PC-3 (cell line): ENCODE measurements at regions of chr14 and their contacts with region 1.

Region 1: DNA sequence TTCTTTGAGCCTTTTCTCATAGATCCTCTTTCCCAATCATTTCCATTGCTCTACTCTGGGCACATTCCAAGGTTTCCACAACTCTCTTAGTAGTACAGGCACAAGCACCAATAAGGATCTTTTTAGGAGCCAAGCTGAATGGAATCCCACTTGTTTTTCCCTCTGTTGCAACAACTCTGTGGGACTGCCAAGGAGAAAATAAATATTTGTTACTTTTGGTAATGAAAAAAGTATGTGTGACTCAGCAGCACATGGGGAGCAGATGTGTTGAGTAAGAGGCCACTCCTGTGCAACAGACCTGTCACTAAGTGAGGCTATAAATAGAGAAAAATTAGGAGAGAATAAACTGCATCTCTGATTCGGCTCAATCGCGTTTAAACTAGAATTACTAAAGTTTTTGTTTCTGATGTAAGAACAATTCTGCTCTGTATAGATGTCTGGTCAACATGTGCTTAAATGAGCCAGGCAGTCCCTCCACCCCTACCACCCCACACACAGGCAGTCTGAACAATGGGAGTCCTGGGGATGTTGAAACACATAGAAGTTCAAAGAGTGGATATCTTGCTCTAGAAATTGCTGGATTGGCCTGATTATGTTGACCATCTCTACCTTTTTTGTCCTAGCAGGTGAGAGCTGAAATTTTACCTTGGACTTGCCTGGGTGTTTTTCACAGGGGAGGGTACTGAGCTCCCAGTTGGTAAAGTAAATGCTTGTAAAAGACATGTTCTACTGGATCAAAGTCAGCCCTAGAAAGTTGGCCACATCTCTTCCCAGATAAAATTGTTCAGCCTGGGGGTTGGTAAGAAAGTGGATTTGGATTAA is 244.3 kb upstream of the NOVA1 start:
- DNase-seq: peak; percentile 98
- ATAC-seq: peak; percentile 92
- H3K4me3 ChIP-seq: peak overlapping the region; percentile 36; the same call in 1 of the 2 replicates
- H3K27ac ChIP-seq: peak overlapping the region; percentile 92
- H3K4me1 ChIP-seq: peaks cover 38% of the 10 kb centered on the region
- H3K27me3 ChIP-seq: no peaks in the 10 kb centered on the region
- CTCF ChIP-seq: no peak

Region 2: DNA sequence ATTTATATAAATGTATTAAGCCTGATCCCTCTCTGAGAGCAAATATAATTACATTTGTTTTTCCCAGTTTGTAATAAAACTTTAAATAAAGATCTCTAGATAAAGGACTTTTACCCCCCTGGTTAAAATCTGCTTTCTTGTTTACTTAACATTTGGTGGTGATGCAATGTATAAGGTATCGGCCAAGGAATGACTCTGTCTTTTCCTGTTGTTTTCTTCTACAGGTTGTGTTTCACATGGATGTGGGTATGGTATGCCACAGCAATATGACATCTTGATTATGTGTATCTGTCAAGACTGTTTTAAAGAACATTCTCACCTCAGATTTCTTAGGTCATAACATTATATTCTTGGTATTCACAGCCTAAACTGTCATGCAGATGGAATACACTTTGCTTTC is 33.7 kb before region 1 on chr14:
- CTCF ChIA-PET with region 1: no interaction called
- POLR2A ChIA-PET with region 1: interaction called, 10 read pairs
- intact Hi-C with region 1: no loop called
- DNase-seq: peak; percentile 61
- ATAC-seq: peak; percentile 91
- H3K4me3 ChIP-seq: no peak overlapping the region
- H3K27ac ChIP-seq: 0 out of 2 replicates have a peak overlapping the region, but pooled peaks have one; percentile 7
- H3K4me1 ChIP-seq: peaks cover 11% of the 10 kb centered on the region
- H3K27me3 ChIP-seq: no peaks in the 10 kb centered on the region
- CTCF ChIP-seq: no peak

Region 3: GRCh38 chr14:26828741-26829140 is 13.4 kb before region 1 on chr14:
- CTCF ChIA-PET with region 1: no interaction called
- POLR2A ChIA-PET with region 1: interaction called, 6 read pairs
- intact Hi-C with region 1: loop called (anchors 2 kb)
- DNase-seq: peak; percentile 26
- ATAC-seq: peak; percentile 72
- H3K4me3 ChIP-seq: no peak overlapping the region
- H3K27ac ChIP-seq: no peak overlapping the region
- H3K4me1 ChIP-seq: peaks cover 8% of the 10 kb centered on the region
- H3K27me3 ChIP-seq: no peaks in the 10 kb centered on the region
- CTCF ChIP-seq: no peak

Region 4: GRCh38 chr14:26867171-26867757 is 25.1 kb after region 1 on chr14:
- CTCF ChIA-PET with region 1: no interaction called
- POLR2A ChIA-PET with region 1: no interaction called
- intact Hi-C with region 1: loop called (anchors 1 kb)
- DNase-seq: peak; percentile 72
- ATAC-seq: peak; percentile 97
- H3K4me3 ChIP-seq: peak overlapping the region; percentile 28; the same call in 1 of the 2 replicates
- H3K27ac ChIP-seq: no peak overlapping the region
- H3K4me1 ChIP-seq: peaks cover 24% of the 10 kb centered on the region
- H3K27me3 ChIP-seq: no peaks in the 10 kb centered on the region
- CTCF ChIP-seq: no peak

Region 5: DNA sequence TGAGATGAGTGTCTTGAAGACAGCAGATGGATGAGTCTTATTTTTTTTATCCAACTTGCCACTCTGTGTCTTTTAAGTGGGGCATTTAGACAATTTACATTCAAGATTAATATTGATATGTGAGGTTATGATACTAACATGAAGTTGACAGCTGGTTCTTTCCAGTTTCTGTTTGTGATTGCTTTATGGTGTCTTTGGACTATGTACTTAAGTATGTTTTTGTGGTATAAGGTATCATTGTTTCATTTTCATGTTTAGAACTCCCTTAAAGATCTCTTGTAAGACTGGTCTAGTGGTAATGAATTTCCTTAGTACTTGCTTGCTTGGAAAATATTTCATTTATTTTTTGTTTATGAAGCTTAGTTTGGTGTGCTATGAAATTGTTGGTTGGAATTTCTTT is 306.0 kb after region 1 on chr14:
- CTCF ChIA-PET with region 1: no interaction called
- POLR2A ChIA-PET with region 1: no interaction called
- intact Hi-C with region 1: no loop called
- DNase-seq: no peak
- ATAC-seq: no peak
- H3K4me3 ChIP-seq: no peak overlapping the region
- H3K27ac ChIP-seq: no peak overlapping the region
- H3K4me1 ChIP-seq: no peaks in the 10 kb centered on the region
- H3K27me3 ChIP-seq: no peaks in the 10 kb centered on the region
- CTCF ChIP-seq: no peak